ENCODE measurements at regions of chr2 and their contacts with region 1.

Region 1: GRCh38 chr2:186862869-186863709 is 14.1 kb upstream of the ZSWIM2 start:
- DNase-seq: no peak
- ATAC-seq: peak; percentile 79
- H3K4me3 ChIP-seq: no peak overlapping the region
- H3K27ac ChIP-seq: no peak overlapping the region
- H3K4me1 ChIP-seq: no peaks in the 10 kb centered on the region
- H3K27me3 ChIP-seq: no peaks in the 10 kb centered on the region
- CTCF ChIP-seq: peak; percentile 35 to 77 (median 48); a peak in 4 of 6 replicates
- EP300 ChIP-seq: no peak
- POLR2A ChIP-seq: no peak
- RAD21 ChIP-seq: peak; percentile 91

Region 2: DNA sequence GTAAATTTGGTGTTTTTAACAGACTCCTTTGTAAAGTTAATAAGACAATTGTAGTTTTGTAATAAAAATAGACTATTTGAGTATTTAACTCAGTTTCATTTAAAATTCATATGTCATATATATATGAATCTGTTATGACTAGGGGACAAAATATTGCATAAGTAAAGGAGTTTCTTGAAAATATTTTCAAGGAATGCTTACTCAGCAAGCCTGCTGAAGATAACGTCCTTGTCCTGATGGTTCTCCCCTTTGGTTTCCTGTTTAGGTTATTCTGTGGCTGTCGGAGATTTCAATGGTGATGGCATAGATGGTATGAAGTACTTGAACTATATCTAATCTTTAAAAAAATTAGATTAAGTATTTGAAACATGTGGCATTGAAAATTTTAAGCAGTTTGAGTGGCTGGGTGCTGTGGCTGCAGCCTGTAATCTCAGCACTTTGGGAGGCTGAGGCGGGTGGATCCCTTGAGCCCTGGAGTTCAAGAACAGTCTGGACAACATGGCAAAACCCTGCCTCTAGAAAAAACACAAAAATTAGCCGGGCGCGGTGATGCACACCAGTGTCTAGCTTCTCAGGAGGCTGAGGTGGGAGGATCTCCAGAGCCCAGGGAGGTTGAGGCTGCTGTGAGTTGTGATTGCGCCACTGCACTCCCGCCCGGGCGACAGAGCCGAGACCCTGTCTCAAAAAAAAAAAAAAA is 226.1 kb before region 1 on chr2:
- CTCF ChIA-PET with region 1: no interaction called
- POLR2A ChIA-PET with region 1: no interaction called
- RAD21 ChIA-PET with region 1: no interaction called
- SMC1A ChIA-PET with region 1: no interaction called
- in situ Hi-C with region 1: no loop called
- intact Hi-C with region 1: no loop called
- DNase-seq: no peak
- ATAC-seq: no peak
- H3K4me3 ChIP-seq: no peak overlapping the region
- H3K27ac ChIP-seq: no peak overlapping the region
- H3K4me1 ChIP-seq: peaks cover 30% of the 10 kb centered on the region
- H3K27me3 ChIP-seq: no peaks in the 10 kb centered on the region
- CTCF ChIP-seq: no peak
- EP300 ChIP-seq: no peak
- POLR2A ChIP-seq: no peak
- RAD21 ChIP-seq: no peak

Region 3: GRCh38 chr2:186887107-186888090 is 24.3 kb after region 1 on chr2:
- CTCF ChIA-PET with region 1: interaction called, 14 read pairs
- POLR2A ChIA-PET with region 1: no interaction called
- RAD21 ChIA-PET with region 1: interaction called, 52 read pairs
- SMC1A ChIA-PET with region 1: interaction called, 28 read pairs
- in situ Hi-C with region 1: no loop called
- intact Hi-C with region 1: no loop called
- DNase-seq: peak; percentile 26
- ATAC-seq: peak; percentile 92
- H3K4me3 ChIP-seq: no peak overlapping the region
- H3K27ac ChIP-seq: no peak overlapping the region
- H3K4me1 ChIP-seq: no peaks in the 10 kb centered on the region
- H3K27me3 ChIP-seq: no peaks in the 10 kb centered on the region
- CTCF ChIP-seq: no peak
- EP300 ChIP-seq: peak; percentile 53 to 59; a peak in 2 of 4 replicates
- POLR2A ChIP-seq: no peak
- RAD21 ChIP-seq: no peak

Region 4: GRCh38 chr2:186913870-186914269 is 50.8 kb after region 1 on chr2:
- CTCF ChIA-PET with region 1: interaction called, 11 read pairs
- POLR2A ChIA-PET with region 1: interaction called, 4 read pairs
- RAD21 ChIA-PET with region 1: interaction called, 17 read pairs
- SMC1A ChIA-PET with region 1: interaction called, 8 read pairs
- in situ Hi-C with region 1: no loop called
- intact Hi-C with region 1: no loop called
- DNase-seq: peak; percentile 3
- ATAC-seq: peak; percentile 99
- H3K4me3 ChIP-seq: no peak overlapping the region
- H3K27ac ChIP-seq: no peak overlapping the region
- H3K4me1 ChIP-seq: peaks cover 3% of the 10 kb centered on the region; the same call in 1 of the 2 replicates
- H3K27me3 ChIP-seq: no peaks in the 10 kb centered on the region; a peak in 1 of 4 replicates
- CTCF ChIP-seq: no peak
- EP300 ChIP-seq: peak in 1 of 2 experiments; percentile 69; a peak in 1 of 4 replicates
- POLR2A ChIP-seq: no peak
- RAD21 ChIP-seq: no peak

Region 5: GRCh38 chr2:187299122-187299906 is 436.2 kb after region 1 on chr2:
- CTCF ChIA-PET with region 1: interaction called, 9 read pairs
- POLR2A ChIA-PET with region 1: no interaction called
- RAD21 ChIA-PET with region 1: interaction called, 13 read pairs
- SMC1A ChIA-PET with region 1: interaction called, 8 read pairs
- in situ Hi-C with region 1: no loop called
- intact Hi-C with region 1: loop called (anchors 5 kb)
- DNase-seq: no peak
- ATAC-seq: peak; percentile 79
- H3K4me3 ChIP-seq: no peak overlapping the region
- H3K27ac ChIP-seq: no peak overlapping the region
- H3K4me1 ChIP-seq: no peaks in the 10 kb centered on the region
- H3K27me3 ChIP-seq: no peaks in the 10 kb centered on the region
- CTCF ChIP-seq: peak; percentile 32 to 49 (median 38); a peak in 4 of 6 replicates
- EP300 ChIP-seq: no peak
- POLR2A ChIP-seq: no peak
- RAD21 ChIP-seq: peak; percentile 69

Region 6: DNA sequence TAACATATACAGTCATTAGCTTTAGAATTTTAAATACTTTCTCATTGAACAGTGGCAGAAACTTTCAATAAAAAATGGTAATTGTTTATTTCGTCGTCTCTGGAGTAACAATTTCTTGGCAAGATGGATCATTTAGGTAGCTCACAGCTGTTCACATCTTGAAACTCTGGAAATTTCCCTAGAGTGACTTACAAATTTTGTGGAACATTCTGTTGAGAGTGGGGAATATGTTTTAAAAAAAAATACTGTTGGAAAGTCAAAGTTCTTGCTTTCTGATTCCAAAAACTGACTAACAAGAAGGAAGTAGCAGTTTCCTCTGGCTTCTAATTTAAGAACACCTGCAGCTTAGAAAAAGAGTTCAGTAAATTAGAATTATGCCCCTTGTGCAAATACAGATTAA is 596.2 kb after region 1 on chr2:
- CTCF ChIA-PET with region 1: interaction called, 103 read pairs
- POLR2A ChIA-PET with region 1: no interaction called
- RAD21 ChIA-PET with region 1: interaction called, 97 read pairs
- SMC1A ChIA-PET with region 1: interaction called, 8 read pairs
- in situ Hi-C with region 1: no loop called
- intact Hi-C with region 1: no loop called
- DNase-seq: no peak
- ATAC-seq: no peak
- H3K4me3 ChIP-seq: no peak overlapping the region
- H3K27ac ChIP-seq: no peak overlapping the region
- H3K4me1 ChIP-seq: no peaks in the 10 kb centered on the region
- H3K27me3 ChIP-seq: no peaks in the 10 kb centered on the region
- CTCF ChIP-seq: no peak
- EP300 ChIP-seq: no peak
- POLR2A ChIP-seq: no peak
- RAD21 ChIP-seq: no peak

Region 7: GRCh38 chr2:188512456-188512855 is 1649.4 kb after region 1 on chr2:
- CTCF ChIA-PET with region 1: no interaction called
- POLR2A ChIA-PET with region 1: no interaction called
- RAD21 ChIA-PET with region 1: no interaction called
- SMC1A ChIA-PET with region 1: no interaction called
- in situ Hi-C with region 1: no loop called
- intact Hi-C with region 1: loop called (anchors 5 kb)
- DNase-seq: no peak
- ATAC-seq: peak; percentile 64
- H3K4me3 ChIP-seq: no peak overlapping the region
- H3K27ac ChIP-seq: no peak overlapping the region
- H3K4me1 ChIP-seq: no peaks in the 10 kb centered on the region
- H3K27me3 ChIP-seq: no peaks in the 10 kb centered on the region
- CTCF ChIP-seq: peak; percentile 17 to 58 (median 24); a peak in 4 of 6 replicates
- EP300 ChIP-seq: no peak
- POLR2A ChIP-seq: no peak
- RAD21 ChIP-seq: peak; percentile 67

Measured in GM12878 (cell line).